ENCODE measurements at regions of chr1 and their contacts with region 1.

Region 1: GRCh38 chr1:111030590-111030989 is 66.9 kb upstream of the LRIF1 start:
- DNase-seq: peak; percentile 54
- ATAC-seq: peak; percentile 74
- H3K4me3 Mint-ChIP-seq: no peak overlapping the region
- H3K27ac Mint-ChIP-seq: no peak overlapping the region
- H3K4me1 Mint-ChIP-seq: peaks cover 9% of the 10 kb centered on the region
- H3K27me3 Mint-ChIP-seq: no peaks in the 10 kb centered on the region
- CTCF ChIP-seq: peak; percentile 50; the same call in 1 of the 2 replicates

Region 2: GRCh38 chr1:111045033-111045722 is 14.6 kb after region 1 on chr1:
- CTCF ChIA-PET with region 1: interaction called, 20 read pairs
- POLR2A ChIA-PET with region 1: no interaction called
- DNase-seq: no peak
- ATAC-seq: no peak
- H3K4me3 Mint-ChIP-seq: no peak overlapping the region
- H3K27ac Mint-ChIP-seq: no peak overlapping the region
- H3K4me1 Mint-ChIP-seq: no peaks in the 10 kb centered on the region
- H3K27me3 Mint-ChIP-seq: peaks cover 6% of the 10 kb centered on the region
- CTCF ChIP-seq: no peak

Measured in WTC11 (cell line).